CD8-positive, alpha-beta T cell (primary cell): ENCODE measurements at regions of chr1 and their contacts with region 1.

Region 1: DNA sequence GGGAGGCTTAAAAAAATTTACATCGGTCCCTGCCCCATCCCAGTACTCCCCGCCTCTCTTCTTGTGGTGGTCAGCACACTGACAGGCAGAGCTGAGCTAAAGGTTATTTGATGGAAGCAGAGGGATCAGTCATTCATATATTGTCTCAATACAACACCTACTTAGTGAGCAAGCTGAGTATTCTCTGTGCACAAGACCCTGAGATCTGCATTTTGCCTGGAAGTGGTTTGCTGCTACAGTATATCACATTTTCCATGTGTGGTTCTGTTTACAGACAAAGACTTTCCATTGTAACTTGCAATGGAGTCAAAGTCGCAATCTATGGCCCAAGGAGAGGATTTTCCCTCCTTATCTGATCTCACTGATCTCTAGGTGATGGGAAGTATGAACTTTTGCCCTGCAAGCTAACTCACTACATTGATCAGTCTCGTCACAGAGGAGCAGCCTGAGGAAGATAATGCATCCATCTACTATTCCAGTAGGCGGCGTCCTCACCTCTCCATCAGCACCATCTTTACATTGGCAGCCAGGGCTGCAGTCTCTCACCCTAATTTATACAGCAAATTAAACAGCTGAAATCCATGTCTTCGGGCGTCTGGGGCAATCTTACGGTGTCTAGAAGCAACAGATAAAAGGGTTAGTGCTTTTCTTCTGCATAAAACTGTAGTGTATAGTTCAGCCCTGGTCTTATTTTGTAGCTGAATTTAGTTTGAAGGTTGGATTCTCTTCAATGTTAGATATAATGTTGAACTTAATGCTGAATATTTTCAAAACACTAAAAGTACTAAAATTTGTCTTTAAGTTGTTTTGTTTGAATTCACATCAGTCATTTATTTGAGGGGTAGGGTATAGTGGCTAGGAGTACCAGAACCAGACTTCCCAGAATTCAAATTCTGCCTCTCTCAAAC is 3.2 kb upstream of the TRAF5 start:
- DNase-seq: peak; percentile 41 to 85 (median 66)
- ATAC-seq: peak; percentile 69
- H3K4me3 ChIP-seq: no peak overlapping the region
- H3K4me3 Mint-ChIP-seq: no peak overlapping the region
- H3K27ac ChIP-seq: no peak overlapping the region
- H3K27ac Mint-ChIP-seq: no peak overlapping the region
- H3K4me1 ChIP-seq: peaks cover 10% of the 10 kb centered on the region
- H3K4me1 Mint-ChIP-seq: peaks cover 29% of the 10 kb centered on the region
- H3K27me3 ChIP-seq: no peaks in the 10 kb centered on the region
- H3K27me3 Mint-ChIP-seq: no peaks in the 10 kb centered on the region
- CTCF ChIP-seq: peak; percentile 81

Region 2: DNA sequence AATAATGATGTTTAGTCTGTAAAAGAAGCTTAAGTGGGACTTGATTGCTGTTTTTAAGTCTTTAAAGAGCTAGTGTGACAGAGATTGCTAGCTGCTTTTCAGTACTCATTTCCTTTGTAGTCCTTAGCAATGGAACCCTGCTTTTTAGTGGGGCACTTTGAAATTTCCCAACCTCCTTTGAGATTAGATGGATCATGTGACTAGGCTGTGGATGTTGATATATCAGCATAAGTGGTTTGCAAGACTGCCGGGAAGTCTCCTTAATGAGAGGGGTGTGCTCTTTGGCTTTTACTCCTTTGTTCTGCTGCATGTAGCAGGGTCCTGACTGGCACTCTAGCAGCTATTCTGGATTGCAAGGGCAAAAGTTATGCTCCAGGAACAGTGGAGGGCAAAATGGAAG is 75.5 kb before region 1 on chr1:
- CTCF ChIA-PET with region 1: no interaction called
- POLR2A ChIA-PET with region 1: no interaction called
- intact Hi-C with region 1: no loop called
- DNase-seq: no peak
- ATAC-seq: no peak
- H3K4me3 ChIP-seq: no peak overlapping the region
- H3K4me3 Mint-ChIP-seq: no peak overlapping the region
- H3K27ac ChIP-seq: no peak overlapping the region
- H3K27ac Mint-ChIP-seq: no peak overlapping the region
- H3K4me1 ChIP-seq: no peaks in the 10 kb centered on the region
- H3K4me1 Mint-ChIP-seq: peaks cover 9% of the 10 kb centered on the region
- H3K27me3 ChIP-seq: no peaks in the 10 kb centered on the region
- H3K27me3 Mint-ChIP-seq: no peaks in the 10 kb centered on the region
- CTCF ChIP-seq: no peak

Region 3: GRCh38 chr1:211279340-211279739 is 44.1 kb before region 1 on chr1:
- CTCF ChIA-PET with region 1: interaction called, 4 read pairs
- POLR2A ChIA-PET with region 1: no interaction called
- intact Hi-C with region 1: loop called in 1 of 2 experiments (anchors 5 kb)
- DNase-seq: no peak
- ATAC-seq: no peak
- H3K4me3 ChIP-seq: no peak overlapping the region
- H3K4me3 Mint-ChIP-seq: no peak overlapping the region
- H3K27ac ChIP-seq: no peak overlapping the region
- H3K27ac Mint-ChIP-seq: no peak overlapping the region
- H3K4me1 ChIP-seq: no peaks in the 10 kb centered on the region
- H3K4me1 Mint-ChIP-seq: peaks cover 7% of the 10 kb centered on the region
- H3K27me3 ChIP-seq: no peaks in the 10 kb centered on the region
- H3K27me3 Mint-ChIP-seq: no peaks in the 10 kb centered on the region
- CTCF ChIP-seq: no peak

Region 4: DNA sequence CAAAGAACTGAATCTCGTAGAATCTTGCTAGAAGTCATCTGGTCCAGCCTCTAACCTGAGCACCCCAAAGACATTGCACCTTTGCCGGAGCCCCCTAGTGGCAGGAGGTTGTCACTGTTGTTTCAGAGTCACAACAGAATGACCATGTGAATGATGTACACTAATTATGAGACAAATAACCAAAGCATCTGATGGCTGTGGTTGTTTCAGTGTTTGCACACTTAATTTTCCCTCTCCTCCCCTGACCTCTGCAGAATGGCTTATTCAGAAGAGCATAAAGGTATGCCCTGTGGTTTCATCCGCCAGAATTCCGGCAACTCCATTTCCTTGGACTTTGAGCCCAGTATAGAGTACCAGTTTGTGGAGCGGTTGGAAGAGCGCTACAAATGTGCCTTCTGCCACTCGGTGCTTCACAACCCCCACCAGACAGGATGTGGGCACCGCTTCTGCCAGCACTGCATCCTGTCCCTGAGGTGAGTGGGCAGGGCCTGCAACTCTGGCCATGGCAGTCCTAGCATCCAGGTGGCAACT is 29.6 kb after region 1 on chr1:
- CTCF ChIA-PET with region 1: interaction called, 40 read pairs
- POLR2A ChIA-PET with region 1: interaction called, 6 read pairs
- intact Hi-C with region 1: loop called (anchors 1 to 2 kb)
- DNase-seq: peak; percentile 21 to 78 (median 66)
- ATAC-seq: peak; percentile 69
- H3K4me3 ChIP-seq: peak overlapping the region; percentile 23 to 26
- H3K4me3 Mint-ChIP-seq: peak overlapping the region; percentile 71
- H3K27ac ChIP-seq: peak overlapping the region in 1 of 2 experiments; percentile 60
- H3K27ac Mint-ChIP-seq: peak overlapping the region; percentile 89
- H3K4me1 ChIP-seq: peaks cover 41% of the 10 kb centered on the region
- H3K4me1 Mint-ChIP-seq: peaks cover 73% of the 10 kb centered on the region
- H3K27me3 ChIP-seq: no peaks in the 10 kb centered on the region
- H3K27me3 Mint-ChIP-seq: no peaks in the 10 kb centered on the region
- CTCF ChIP-seq: peak; percentile 57

Region 5: DNA sequence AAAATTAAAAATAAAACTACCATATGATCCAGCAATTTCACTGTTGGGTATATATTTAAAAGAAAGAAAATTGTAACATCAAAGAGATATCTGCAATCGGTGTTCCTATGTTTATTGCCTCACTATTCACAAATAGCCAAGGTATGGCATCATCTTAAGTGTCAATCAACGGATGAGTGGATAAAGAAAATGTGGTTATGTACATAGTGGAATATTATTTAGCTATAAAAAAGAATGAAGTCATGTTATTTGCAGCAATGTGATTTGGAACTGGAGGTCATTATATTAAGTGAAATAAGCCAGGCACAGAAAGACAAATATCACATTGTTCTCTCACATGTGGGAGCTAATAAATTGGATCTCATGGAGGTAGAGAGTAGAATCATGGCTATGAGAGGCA is 92.3 kb after region 1 on chr1:
- CTCF ChIA-PET with region 1: interaction called, 13 read pairs
- POLR2A ChIA-PET with region 1: interaction called, 4 read pairs
- intact Hi-C with region 1: loop called (anchors 1 to 5 kb)
- DNase-seq: no peak
- ATAC-seq: no peak
- H3K4me3 ChIP-seq: no peak overlapping the region
- H3K4me3 Mint-ChIP-seq: peak overlapping the region; percentile 59
- H3K27ac ChIP-seq: no peak overlapping the region
- H3K27ac Mint-ChIP-seq: peak overlapping the region; percentile 72
- H3K4me1 ChIP-seq: peaks cover 8% of the 10 kb centered on the region
- H3K4me1 Mint-ChIP-seq: peaks cover 13% of the 10 kb centered on the region
- H3K27me3 ChIP-seq: no peaks in the 10 kb centered on the region
- H3K27me3 Mint-ChIP-seq: no peaks in the 10 kb centered on the region
- CTCF ChIP-seq: no peak

Region 6: DNA sequence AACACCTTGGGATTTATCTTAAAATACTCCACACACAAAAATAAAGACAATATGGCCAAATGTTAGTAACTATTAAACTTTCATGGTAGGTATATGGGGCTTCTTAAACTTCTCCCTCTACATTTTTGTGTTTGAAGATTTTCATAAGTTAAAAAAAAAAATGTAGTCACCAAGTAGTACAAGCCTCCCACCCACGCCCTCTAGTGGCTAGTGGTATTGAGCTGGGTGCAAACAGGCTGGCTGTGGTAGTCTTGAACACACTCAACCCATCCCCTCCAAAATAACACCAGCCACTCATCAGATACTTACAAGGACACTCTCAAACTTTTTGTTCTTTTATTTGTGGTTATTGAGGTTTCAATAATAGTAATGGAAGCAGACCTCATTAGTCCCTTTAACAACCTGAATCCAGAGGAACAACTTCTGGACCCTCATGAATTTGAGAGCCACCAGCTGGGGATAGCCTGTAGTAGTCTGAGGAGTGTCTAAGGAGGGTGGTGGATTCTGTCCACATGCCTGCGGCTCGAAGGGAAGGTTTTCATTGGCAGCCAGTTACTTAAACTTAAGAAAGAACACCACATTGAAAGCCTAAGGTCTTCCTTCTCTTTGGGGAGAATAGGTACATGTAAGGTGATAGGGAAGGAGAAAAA is 152.9 kb after region 1 on chr1:
- CTCF ChIA-PET with region 1: interaction called, 88 read pairs
- POLR2A ChIA-PET with region 1: no interaction called
- intact Hi-C with region 1: loop called (anchors 1 kb)
- DNase-seq: peak; percentile 46 to 84 (median 81)
- ATAC-seq: peak; percentile 73
- H3K4me3 ChIP-seq: no peak overlapping the region
- H3K4me3 Mint-ChIP-seq: no peak overlapping the region
- H3K27ac ChIP-seq: no peak overlapping the region
- H3K27ac Mint-ChIP-seq: no peak overlapping the region
- H3K4me1 ChIP-seq: no peaks in the 10 kb centered on the region
- H3K4me1 Mint-ChIP-seq: no peaks in the 10 kb centered on the region
- H3K27me3 ChIP-seq: peaks cover 0 to 2% of the 10 kb centered on the region in 2 experiments
- H3K27me3 Mint-ChIP-seq: peaks cover 27% of the 10 kb centered on the region
- CTCF ChIP-seq: peak; percentile 89

Region 7: DNA sequence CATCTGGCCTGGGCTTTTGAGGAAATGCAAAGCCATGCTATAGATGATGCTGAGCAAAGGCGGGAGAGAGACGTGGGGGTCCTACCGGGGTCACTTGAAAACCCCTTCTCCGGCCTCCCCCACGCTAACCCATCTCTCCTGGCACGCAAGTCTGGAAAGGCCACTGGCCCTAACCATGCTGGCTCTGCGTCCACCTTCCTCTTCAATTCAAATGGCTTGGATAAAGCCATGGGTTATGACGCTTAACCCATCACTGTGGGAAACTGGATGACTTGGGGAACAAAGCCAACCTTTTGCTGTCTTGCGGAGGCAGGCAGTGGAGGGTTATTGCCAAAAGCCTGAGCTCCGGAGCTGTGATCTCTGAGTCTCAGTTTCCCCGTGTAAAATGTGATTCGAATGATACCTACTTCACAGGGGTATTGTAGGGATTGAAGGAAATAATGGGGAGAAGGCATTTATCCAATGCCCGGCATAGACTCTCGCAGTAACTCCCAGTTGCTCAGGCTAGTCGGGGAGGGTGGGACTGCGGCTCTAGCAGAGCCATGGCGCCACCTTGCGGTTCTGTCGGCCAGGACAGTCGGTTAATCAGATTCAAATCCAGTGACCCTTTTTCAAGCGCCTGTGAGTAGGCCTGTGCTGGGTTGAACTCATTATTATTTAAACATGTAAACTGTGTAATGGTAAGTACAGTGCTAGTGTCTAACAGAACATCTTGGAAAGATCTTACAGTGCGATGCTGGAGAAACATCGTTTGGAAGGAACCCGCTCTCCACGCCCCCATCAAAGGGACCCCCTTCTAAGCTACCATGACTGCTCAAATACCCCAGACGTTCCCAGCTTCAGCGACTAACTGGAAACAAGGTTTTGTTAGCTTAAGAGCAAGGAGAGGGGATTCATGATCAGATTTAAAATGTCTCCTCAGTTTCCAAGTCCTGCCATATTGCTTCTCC is 331.7 kb after region 1 on chr1:
- CTCF ChIA-PET with region 1: interaction called, 7 read pairs
- POLR2A ChIA-PET with region 1: no interaction called
- intact Hi-C with region 1: loop called (anchors 1 to 5 kb)
- DNase-seq: peak; percentile 63 to 86 (median 83)
- ATAC-seq: peak; percentile 95
- H3K4me3 ChIP-seq: no peak overlapping the region
- H3K4me3 Mint-ChIP-seq: no peak overlapping the region
- H3K27ac ChIP-seq: no peak overlapping the region
- H3K27ac Mint-ChIP-seq: no peak overlapping the region
- H3K4me1 ChIP-seq: no peaks in the 10 kb centered on the region
- H3K4me1 Mint-ChIP-seq: no peaks in the 10 kb centered on the region
- H3K27me3 ChIP-seq: no peaks in the 10 kb centered on the region
- H3K27me3 Mint-ChIP-seq: peaks cover 2% of the 10 kb centered on the region
- CTCF ChIP-seq: peak; percentile 86

Region 8: DNA sequence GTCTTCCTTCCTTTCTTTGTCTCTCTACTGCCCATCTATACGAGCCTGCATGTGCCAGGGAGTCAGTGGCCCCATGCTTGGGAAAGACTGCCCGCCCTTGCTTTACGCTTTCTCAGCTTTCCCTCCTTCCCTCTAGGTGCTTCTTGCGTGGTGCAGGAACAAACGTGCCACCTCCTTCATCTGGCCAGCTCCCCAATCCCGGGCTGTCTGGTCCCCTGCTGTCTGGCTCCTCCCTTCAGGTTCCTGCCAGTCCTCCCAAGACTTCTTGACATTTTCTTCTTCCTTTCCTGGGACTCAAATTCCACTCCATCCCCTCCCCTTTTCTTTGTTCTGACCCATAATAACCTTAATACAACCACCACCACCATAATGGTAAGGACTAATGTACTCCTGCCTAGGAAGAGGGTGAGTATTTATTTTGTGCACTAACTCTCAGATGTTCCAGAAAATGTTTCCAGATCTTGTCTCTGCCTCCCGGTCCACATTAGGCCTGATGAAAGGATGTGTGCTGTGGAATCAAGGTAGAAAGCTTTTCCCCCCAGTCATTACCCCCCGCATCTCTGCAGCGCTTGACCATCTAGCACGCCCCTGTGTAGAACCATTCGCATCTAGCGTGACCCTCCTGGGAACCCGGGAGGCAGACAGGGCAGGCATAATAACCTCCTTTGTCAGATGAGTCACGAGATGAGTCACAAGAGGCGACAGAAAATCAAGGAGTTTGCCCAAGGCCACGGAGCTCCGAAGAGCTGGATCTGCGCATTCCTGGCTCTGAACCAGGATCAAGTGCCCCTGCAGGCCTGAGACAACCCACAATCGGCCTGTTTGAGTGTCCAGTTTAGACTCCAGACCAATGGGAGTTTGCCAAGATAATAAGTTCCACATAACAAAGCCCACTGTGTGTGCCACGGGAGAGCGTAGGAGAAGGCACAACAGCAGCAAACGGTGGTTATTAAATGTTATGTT is 412.1 kb after region 1 on chr1:
- CTCF ChIA-PET with region 1: no interaction called
- POLR2A ChIA-PET with region 1: no interaction called
- intact Hi-C with region 1: no loop called
- DNase-seq: no peak
- ATAC-seq: no peak
- H3K4me3 ChIP-seq: no peak overlapping the region
- H3K4me3 Mint-ChIP-seq: no peak overlapping the region
- H3K27ac ChIP-seq: no peak overlapping the region
- H3K27ac Mint-ChIP-seq: no peak overlapping the region
- H3K4me1 ChIP-seq: peaks cover 33% of the 10 kb centered on the region
- H3K4me1 Mint-ChIP-seq: peaks cover 37% of the 10 kb centered on the region
- H3K27me3 ChIP-seq: no peaks in the 10 kb centered on the region
- H3K27me3 Mint-ChIP-seq: no peaks in the 10 kb centered on the region
- CTCF ChIP-seq: no peak